Endothelial cell of umbilical vein (primary cell): ENCODE measurements at regions of chr10 and their contacts with region 1.

Region 1: DNA sequence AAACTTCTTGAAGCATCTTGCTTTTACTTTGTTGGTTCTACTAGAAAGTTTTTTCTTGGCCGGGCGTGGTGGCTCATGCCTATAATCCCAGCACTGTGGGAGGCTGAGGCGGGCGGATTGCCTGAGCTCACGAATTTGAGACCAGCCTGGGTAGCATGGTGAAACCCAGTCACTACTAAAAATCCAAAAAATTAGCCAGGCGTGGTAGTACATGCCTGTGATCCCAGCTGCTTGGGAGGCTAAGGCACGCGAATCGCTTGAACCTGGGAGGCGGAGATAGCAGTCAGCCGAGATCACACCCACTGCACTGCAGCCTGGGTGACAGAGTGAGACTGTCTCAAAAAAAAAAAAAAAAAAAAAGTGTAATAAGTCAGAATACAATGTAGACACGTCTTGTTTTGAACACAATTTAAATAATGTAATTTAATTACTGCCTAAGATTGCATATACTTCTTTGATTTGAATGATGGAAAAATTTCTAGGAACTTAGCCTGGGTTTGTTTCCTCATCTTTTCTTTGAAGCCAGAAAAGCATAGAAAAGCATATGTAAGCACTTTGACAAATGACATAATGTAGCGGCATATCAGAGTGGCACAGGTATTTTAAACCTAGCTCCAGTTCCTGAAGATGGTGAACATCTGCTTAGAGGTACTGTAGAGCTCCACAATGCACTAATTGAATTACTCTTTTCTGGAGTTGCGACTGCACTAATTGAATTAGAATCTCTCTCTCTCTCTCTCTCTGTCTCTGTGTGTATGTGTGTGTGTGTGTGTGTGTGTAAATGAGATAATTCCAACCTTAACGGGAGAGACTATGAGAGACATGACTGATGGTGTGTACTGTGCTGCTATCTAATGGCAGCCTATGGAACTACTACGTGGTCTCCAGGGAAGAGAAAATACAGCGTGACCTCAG is 87.8 kb downstream of the BTRC start:
- DNase-seq: peak; percentile 70
- H3K4me3 ChIP-seq: no peak overlapping the region
- H3K27ac ChIP-seq: no peak overlapping the region
- H3K4me1 ChIP-seq: no peaks in the 10 kb centered on the region
- H3K27me3 ChIP-seq: no peaks in the 10 kb centered on the region
- CTCF ChIP-seq: peak; percentile 51 to 61
- POLR2A ChIP-seq: no peak

Region 2: GRCh38 chr10:101272229-101272868 is 169.4 kb before region 1 on chr10:
- CTCF ChIA-PET with region 1: interaction called, 42 read pairs
- POLR2A ChIA-PET with region 1: no interaction called
- dilution Hi-C with region 1: no loop called
- intact Hi-C with region 1: loop called (anchors 1 kb)
- DNase-seq: peak; percentile 70
- H3K4me3 ChIP-seq: no peak overlapping the region
- H3K27ac ChIP-seq: no peak overlapping the region
- H3K4me1 ChIP-seq: no peaks in the 10 kb centered on the region
- H3K27me3 ChIP-seq: peaks cover 3 to 8% of the 10 kb centered on the region in 2 experiments
- CTCF ChIP-seq: peak; percentile 77 to 89
- POLR2A ChIP-seq: no peak

Region 3: DNA sequence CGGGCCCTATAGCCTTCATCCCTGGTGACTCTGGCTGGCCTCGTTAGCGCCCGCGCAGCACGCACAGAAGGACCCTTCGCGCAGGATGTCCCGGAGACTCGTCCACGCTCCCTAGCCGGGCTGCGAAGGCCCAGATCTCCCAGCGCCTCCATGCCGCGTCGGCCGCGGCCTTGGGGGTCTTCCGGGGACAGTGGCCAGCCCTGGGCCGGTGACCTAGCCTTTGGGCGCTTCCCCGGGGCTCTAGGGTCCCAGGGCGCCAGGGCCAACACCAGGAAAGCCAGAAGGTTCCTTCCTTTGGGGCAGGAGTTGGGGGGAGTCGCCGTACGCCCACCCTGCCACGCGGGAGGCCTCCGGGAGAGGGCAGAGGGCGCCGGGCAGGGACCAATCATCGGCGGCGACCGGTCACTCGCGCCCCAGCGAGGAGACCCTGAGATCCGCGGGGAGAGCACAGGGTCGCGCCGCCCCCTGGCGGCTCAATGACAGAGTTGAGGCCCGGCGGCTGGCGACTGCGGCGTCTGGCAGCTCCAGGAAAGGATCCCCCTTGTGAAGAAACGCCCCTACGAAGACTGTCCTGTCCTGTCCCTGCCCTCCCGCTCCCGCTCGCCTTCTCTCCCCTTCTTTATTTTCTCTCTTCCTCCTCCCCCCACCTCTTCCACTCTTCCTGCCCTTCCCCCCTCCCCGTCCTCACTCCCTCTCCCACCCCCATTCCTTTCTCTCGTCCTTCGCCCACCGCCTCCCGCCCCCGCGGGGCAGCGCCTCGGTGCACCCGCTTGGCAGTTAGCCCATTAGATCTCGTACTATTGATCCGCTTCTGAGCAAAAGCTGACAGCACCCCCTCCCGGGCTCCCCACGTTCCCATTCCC is 150.2 kb before region 1 on chr10:
- CTCF ChIA-PET with region 1: interaction called, 25 read pairs
- POLR2A ChIA-PET with region 1: no interaction called
- dilution Hi-C with region 1: no loop called
- intact Hi-C with region 1: loop called (anchors 1 kb)
- DNase-seq: peak; percentile 33
- H3K4me3 ChIP-seq: peak overlapping the region in 2 of 3 experiments; percentile 32 to 46
- H3K27ac ChIP-seq: no peak overlapping the region
- H3K4me1 ChIP-seq: peaks cover 2% of the 10 kb centered on the region
- H3K27me3 ChIP-seq: peaks cover 54 to 56% of the 10 kb centered on the region in 2 experiments
- CTCF ChIP-seq: peak; percentile 61 to 90
- POLR2A ChIP-seq: no peak

Region 4: DNA sequence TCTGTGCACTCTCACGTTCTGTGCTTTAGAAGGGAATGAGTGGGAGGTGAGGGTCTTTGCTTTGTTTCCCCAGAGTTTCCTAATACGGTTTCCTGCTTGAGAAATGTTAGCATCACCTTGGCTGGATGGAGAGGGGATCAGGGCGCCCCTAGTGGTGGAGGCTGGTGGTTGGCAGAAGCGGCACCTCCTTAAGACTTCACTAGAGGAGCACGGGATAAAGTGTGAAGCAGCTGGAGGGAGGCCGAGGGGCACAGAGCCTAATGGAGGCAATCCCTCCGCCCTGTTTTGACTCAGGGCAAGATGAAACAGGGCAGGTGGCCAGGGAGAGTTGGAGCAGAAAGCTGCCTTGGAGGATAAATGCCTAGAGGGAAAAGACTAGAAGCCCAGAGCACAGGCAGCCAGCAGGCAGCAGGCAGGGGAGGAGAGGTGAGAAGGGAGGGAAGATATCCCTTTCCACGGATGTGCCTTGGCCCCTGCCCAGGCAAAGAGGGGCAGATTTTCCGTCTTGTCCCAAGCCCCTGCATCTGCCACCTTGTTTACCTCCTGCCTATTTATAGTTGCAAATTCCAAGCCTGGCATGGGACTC is 143.8 kb before region 1 on chr10:
- CTCF ChIA-PET with region 1: interaction called, 57 read pairs
- POLR2A ChIA-PET with region 1: no interaction called
- dilution Hi-C with region 1: no loop called
- intact Hi-C with region 1: loop called (anchors 1 kb)
- DNase-seq: peak; percentile 65
- H3K4me3 ChIP-seq: no peak overlapping the region
- H3K27ac ChIP-seq: no peak overlapping the region
- H3K4me1 ChIP-seq: no peaks in the 10 kb centered on the region
- H3K27me3 ChIP-seq: peaks cover 17 to 37% of the 10 kb centered on the region in 2 experiments
- CTCF ChIP-seq: peak; percentile 91 to 92
- POLR2A ChIP-seq: no peak

Region 5: GRCh38 chr10:101305320-101306241 is 136.2 kb before region 1 on chr10:
- CTCF ChIA-PET with region 1: interaction called, 57 read pairs
- POLR2A ChIA-PET with region 1: no interaction called
- dilution Hi-C with region 1: no loop called
- intact Hi-C with region 1: loop called (anchors 1 kb)
- DNase-seq: no peak
- H3K4me3 ChIP-seq: no peak overlapping the region
- H3K27ac ChIP-seq: no peak overlapping the region
- H3K4me1 ChIP-seq: no peaks in the 10 kb centered on the region
- H3K27me3 ChIP-seq: peaks cover 40 to 49% of the 10 kb centered on the region in 2 experiments
- CTCF ChIP-seq: no peak
- POLR2A ChIP-seq: no peak

Region 6: DNA sequence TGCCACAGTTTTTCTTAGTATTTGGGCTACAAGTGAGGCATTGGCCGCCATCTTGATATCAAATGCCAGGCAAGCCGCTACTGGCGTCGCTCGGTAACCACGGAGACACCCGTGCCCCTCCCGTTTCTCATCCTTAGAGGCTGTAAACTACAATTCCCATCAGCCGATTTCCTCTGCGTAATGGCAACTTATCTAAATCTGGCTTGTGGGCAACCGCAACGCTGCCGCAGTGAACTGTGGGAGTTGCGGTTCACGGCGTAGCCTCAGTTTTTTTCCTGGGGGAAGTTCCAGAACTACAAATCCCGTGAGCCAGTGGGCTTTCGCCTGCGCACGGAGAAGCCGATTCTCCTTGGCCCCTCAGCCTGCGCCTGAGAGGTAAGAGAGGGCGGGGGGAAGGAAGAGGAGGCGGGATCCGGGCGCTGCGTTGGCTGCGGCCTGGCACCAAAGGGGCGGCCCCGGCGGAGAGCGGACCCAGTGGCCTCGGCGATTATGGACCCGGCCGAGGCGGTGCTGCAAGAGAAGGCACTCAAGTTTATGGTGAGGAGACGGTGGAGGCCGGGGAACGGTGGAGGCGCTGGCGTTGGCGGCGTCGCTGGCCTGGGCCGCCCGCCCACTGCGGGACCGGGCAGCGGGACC is 88.0 kb before region 1 on chr10 and contains the start of gene BTRC:
- CTCF ChIA-PET with region 1: interaction called, 6 read pairs
- POLR2A ChIA-PET with region 1: no interaction called
- dilution Hi-C with region 1: no loop called
- intact Hi-C with region 1: loop called (anchors 5 kb)
- DNase-seq: peak; percentile 100
- H3K4me3 ChIP-seq: peak within 1 kb of the TSS; percentile 76 to 97 (median 78)
- H3K27ac ChIP-seq: peak within 1 kb of the TSS; percentile 61
- H3K4me1 ChIP-seq: peaks cover 11% of the 10 kb centered on the region
- H3K27me3 ChIP-seq: peaks cover 5 to 6% of the 10 kb centered on the region in 2 experiments
- CTCF ChIP-seq: no peak
- POLR2A ChIP-seq: peak; percentile 72
- total RNA-seq, gene BTRC: 18.5 and 19.7 TPM in 2 replicates

Region 7: GRCh38 chr10:101379663-101380352 is 62.0 kb before region 1 on chr10:
- CTCF ChIA-PET with region 1: no interaction called
- POLR2A ChIA-PET with region 1: no interaction called
- dilution Hi-C with region 1: no loop called
- intact Hi-C with region 1: no loop called
- DNase-seq: no peak
- H3K4me3 ChIP-seq: no peak overlapping the region
- H3K27ac ChIP-seq: no peak overlapping the region
- H3K4me1 ChIP-seq: no peaks in the 10 kb centered on the region
- H3K27me3 ChIP-seq: no peaks in the 10 kb centered on the region
- CTCF ChIP-seq: no peak
- POLR2A ChIP-seq: no peak

Region 8: GRCh38 chr10:101453791-101454718 is 12.3 kb after region 1 on chr10:
- CTCF ChIA-PET with region 1: interaction called, 12 read pairs
- POLR2A ChIA-PET with region 1: no interaction called
- dilution Hi-C with region 1: no loop called
- intact Hi-C with region 1: no loop called
- DNase-seq: no peak
- H3K4me3 ChIP-seq: no peak overlapping the region
- H3K27ac ChIP-seq: no peak overlapping the region
- H3K4me1 ChIP-seq: no peaks in the 10 kb centered on the region
- H3K27me3 ChIP-seq: no peaks in the 10 kb centered on the region
- CTCF ChIP-seq: no peak
- POLR2A ChIP-seq: no peak